Pancreas (tissue), 10 donors: ENCODE measurements at regions of chr4 and their contacts with region 1.

Region 1: GRCh38 chr4:25970226-25970675 is 56.2 kb downstream of the SMIM20 start:
- DNase-seq: peak in 2 of 6 donors; percentile 29 to 31
- ATAC-seq: peak in 3 of 4 donors; percentile 78 to 81 (median 78)
- H3K4me3 ChIP-seq: no peak overlapping the region
- H3K27ac ChIP-seq: peak overlapping the region in 3 of 4 donors; percentile 54 to 81 (median 58)
- H3K4me1 ChIP-seq: peaks cover 0 to 10% (median 0%) of the 10 kb centered on the region in 3 donors
- H3K27me3 ChIP-seq: no peaks in the 10 kb centered on the region
- CTCF ChIP-seq: no peak

Region 2: DNA sequence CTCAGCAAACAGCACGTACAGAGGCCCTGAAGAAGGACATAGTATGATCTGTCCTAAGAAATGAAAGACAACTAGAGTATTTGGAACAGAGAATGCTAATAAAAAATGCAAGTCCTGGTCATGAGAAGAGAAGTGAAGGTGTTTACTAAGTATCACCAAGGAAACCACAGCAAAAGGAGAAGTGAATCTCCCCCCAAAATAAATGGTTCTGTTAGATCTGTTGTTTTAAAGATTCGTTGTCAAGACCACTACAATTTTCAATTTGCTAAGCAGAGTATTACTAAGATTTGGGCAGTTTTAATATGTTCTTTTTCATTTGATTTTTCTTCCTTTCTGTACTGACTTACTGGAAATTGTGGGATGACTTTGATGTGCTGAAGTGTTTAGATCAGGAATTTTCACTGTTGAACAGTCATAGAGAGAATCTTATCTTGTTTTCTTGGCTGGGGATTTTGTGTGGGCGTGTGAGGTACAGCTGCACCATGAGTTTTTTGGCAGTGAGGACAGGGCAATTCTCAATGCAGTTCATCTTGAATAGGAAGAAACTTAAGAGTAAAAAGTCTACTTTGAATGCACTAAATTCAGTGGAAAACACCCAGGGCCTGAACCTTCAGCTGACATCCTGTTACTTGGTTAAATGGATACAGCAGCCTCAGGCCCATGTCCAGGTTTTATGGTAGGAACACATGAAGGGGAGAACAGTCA is 1022.6 kb after region 1 on chr4:
- intact Hi-C with region 1: loop called in 1 of 3 experiments (anchors 10 kb)
- DNase-seq: no peak
- ATAC-seq: peak; percentile 35 to 79 (median 63)
- H3K4me3 ChIP-seq: no peak overlapping the region
- H3K27ac ChIP-seq: peak overlapping the region in 2 of 4 donors; percentile 2 to 14
- H3K4me1 ChIP-seq: peaks cover 0 to 11% (median 4%) of the 10 kb centered on the region in 3 donors
- H3K27me3 ChIP-seq: no peaks in the 10 kb centered on the region
- CTCF ChIP-seq: no peak